Common myeloid progenitor, CD34-positive (primary cell): ENCODE measurements at regions of chr21 and their contacts with region 1.

Region 1: GRCh38 chr21:33479679-33480480 is at the start of gene TMEM50B:
- DNase-seq: peak; percentile 97 to 99 (median 99)
- H3K4me3 ChIP-seq: peak within 1 kb of the TSS; percentile 81 to 99 (median 91)
- H3K27ac ChIP-seq: peak within 1 kb of the TSS; percentile 87 to 95
- H3K4me1 ChIP-seq: peaks cover 0 to 15% (median 13%) of the 10 kb centered on the region in 4 experiments
- H3K27me3 ChIP-seq: no peaks in the 10 kb centered on the region

Region 2: GRCh38 chr21:32803651-32804050 is 676.2 kb before region 1 on chr21:
- CTCF ChIA-PET with region 1: no interaction called
- POLR2A ChIA-PET with region 1: no interaction called
- DNase-seq: peak; percentile 9 to 54 (median 33)
- H3K4me3 ChIP-seq: no peak overlapping the region
- H3K27ac ChIP-seq: no peak overlapping the region
- H3K4me1 ChIP-seq: peaks cover 4 to 7% (median 4%) of the 10 kb centered on the region in 4 experiments
- H3K27me3 ChIP-seq: no peaks in the 10 kb centered on the region

Region 3: DNA sequence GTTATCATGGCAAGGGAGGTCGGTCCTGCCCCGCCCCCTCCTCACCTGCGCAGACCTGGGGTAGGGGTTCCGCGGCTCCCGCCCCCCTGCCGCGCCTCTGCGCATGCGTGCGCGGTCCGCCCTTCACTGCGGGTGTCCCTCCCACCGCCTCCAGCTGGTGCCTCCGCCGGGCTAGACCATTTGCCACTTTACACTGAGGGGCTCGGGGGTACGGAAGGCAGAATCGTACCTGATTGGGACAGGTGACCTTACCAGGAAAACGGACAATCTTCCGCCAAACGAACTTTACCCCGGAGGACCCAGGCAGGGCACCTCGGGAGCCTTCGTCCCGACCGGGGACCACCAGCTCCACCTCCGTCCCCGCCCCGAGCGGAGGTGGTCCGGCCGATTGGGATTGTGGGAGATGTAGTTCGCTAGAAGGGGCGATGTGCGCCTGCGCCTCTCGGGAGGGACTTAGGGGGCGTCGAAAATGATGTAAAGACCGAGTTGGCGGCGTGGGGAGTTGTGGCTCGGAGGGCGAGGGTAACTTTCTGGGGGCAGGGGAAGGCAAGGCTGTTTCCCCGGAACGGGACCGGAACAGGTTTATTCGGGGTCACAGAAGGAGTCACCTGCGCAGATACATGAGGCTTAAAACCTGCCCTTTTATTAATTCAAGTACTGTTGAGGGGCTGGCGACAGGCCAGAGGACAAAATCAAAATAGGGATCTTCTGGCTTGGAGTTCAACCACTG is 11.7 kb after region 1 on chr21 and contains the start of gene DNAJC28:
- CTCF ChIA-PET with region 1: interaction called, 13 read pairs
- POLR2A ChIA-PET with region 1: interaction called, 26 read pairs
- DNase-seq: peak; percentile 96 to 99 (median 97)
- H3K4me3 ChIP-seq: peak within 1 kb of the TSS; percentile 71 to 97 (median 92)
- H3K27ac ChIP-seq: peak within 1 kb of the TSS; percentile 58 to 81
- H3K4me1 ChIP-seq: peaks cover 2 to 14% (median 9%) of the 10 kb centered on the region in 4 experiments
- H3K27me3 ChIP-seq: no peaks in the 10 kb centered on the region

Region 4: GRCh38 chr21:33668180-33668579 is 188.3 kb after region 1 on chr21:
- CTCF ChIA-PET with region 1: no interaction called
- POLR2A ChIA-PET with region 1: no interaction called
- DNase-seq: no peak
- H3K4me3 ChIP-seq: no peak overlapping the region
- H3K27ac ChIP-seq: no peak overlapping the region
- H3K4me1 ChIP-seq: no peaks in the 10 kb centered on the region
- H3K27me3 ChIP-seq: no peaks in the 10 kb centered on the region